ENCODE measurements at regions of chr2 and their contacts with region 1.

Region 1: GRCh38 chr2:197434541-197435513 is at the start of gene SF3B1:
- DNase-seq: peak; percentile 100
- H3K4me3 Mint-ChIP-seq: peak within 1 kb of the TSS; percentile 84
- H3K27ac Mint-ChIP-seq: peak within 1 kb of the TSS; percentile 100
- H3K4me1 Mint-ChIP-seq: peaks cover 45% of the 10 kb centered on the region
- H3K27me3 Mint-ChIP-seq: peaks cover 2% of the 10 kb centered on the region
- total RNA-seq, gene SF3B1: 259 and 278 TPM in 2 replicates

Region 2: GRCh38 chr2:197209742-197210408 is 225.0 kb before region 1 on chr2:
- intact Hi-C with region 1: loop called (anchors 5 kb)
- DNase-seq: peak; percentile 87
- H3K4me3 Mint-ChIP-seq: peak overlapping the region; percentile 68
- H3K27ac Mint-ChIP-seq: peak overlapping the region; percentile 97
- H3K4me1 Mint-ChIP-seq: peaks cover 93% of the 10 kb centered on the region
- H3K27me3 Mint-ChIP-seq: no peaks in the 10 kb centered on the region

Region 3: DNA sequence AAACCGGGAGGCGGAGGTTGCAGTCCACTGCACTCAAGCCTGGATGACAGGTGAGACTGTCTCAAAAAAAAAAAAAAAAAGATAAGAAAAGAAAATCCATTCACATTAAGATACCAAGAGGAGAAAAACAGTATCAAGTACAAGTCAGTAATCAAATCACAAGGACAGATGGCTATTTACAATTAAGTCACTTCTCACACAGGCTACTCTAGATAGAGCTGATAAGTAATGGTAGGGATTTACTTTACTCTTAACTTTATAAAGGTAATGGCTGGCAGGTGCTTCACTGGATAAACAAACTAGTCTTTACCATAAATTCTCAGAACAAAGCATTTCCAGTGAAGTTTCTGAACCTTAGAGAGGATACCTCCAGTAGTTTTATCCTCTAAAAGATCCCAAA is 11.5 kb before region 1 on chr2:
- intact Hi-C with region 1: loop called (anchors 1 kb)
- DNase-seq: no peak
- H3K4me3 Mint-ChIP-seq: no peak overlapping the region
- H3K27ac Mint-ChIP-seq: no peak overlapping the region
- H3K4me1 Mint-ChIP-seq: peaks cover 40% of the 10 kb centered on the region
- H3K27me3 Mint-ChIP-seq: no peaks in the 10 kb centered on the region

Region 4: GRCh38 chr2:197453161-197453914 is 18.5 kb after region 1 on chr2 and contains the start of gene COQ10B:
- intact Hi-C with region 1: loop called (anchors 1 kb)
- DNase-seq: peak; percentile 100
- H3K4me3 Mint-ChIP-seq: peak within 1 kb of the TSS; percentile 100
- H3K27ac Mint-ChIP-seq: peak within 1 kb of the TSS; percentile 100
- H3K4me1 Mint-ChIP-seq: peaks cover 26% of the 10 kb centered on the region
- H3K27me3 Mint-ChIP-seq: no peaks in the 10 kb centered on the region
- total RNA-seq, gene COQ10B: 20.1 TPM in 2 replicates

Region 5: GRCh38 chr2:197499594-197500526 is 65.0 kb after region 1 on chr2 and contains the starts of genes HSPD1 and HSPE1:
- intact Hi-C with region 1: loop called (anchors 1 kb)
- DNase-seq: peak; percentile 99
- H3K4me3 Mint-ChIP-seq: peak within 1 kb of the TSS; percentile 95
- H3K27ac Mint-ChIP-seq: peak within 1 kb of the TSS; percentile 98
- H3K4me1 Mint-ChIP-seq: peaks cover 41% of the 10 kb centered on the region
- H3K27me3 Mint-ChIP-seq: no peaks in the 10 kb centered on the region
- total RNA-seq, gene HSPD1: 984 and 999 TPM in 2 replicates
- total RNA-seq, gene HSPE1: 409 and 411 TPM in 2 replicates

Region 6: GRCh38 chr2:197515739-197516392 is 81.0 kb after region 1 on chr2 and contains the start of gene MOB4:
- intact Hi-C with region 1: loop called (anchors 1 kb)
- DNase-seq: peak; percentile 99
- H3K4me3 Mint-ChIP-seq: peak within 1 kb of the TSS; percentile 94
- H3K27ac Mint-ChIP-seq: peak within 1 kb of the TSS; percentile 91
- H3K4me1 Mint-ChIP-seq: peaks cover 21% of the 10 kb centered on the region
- H3K27me3 Mint-ChIP-seq: no peaks in the 10 kb centered on the region
- total RNA-seq, gene MOB4: 19.2 and 22.6 TPM in 2 replicates

Region 7: GRCh38 chr2:197777823-197778407 is 343.1 kb after region 1 on chr2:
- intact Hi-C with region 1: loop called (anchors 10 kb)
- DNase-seq: peak; percentile 77
- H3K4me3 Mint-ChIP-seq: no peak overlapping the region
- H3K27ac Mint-ChIP-seq: no peak overlapping the region
- H3K4me1 Mint-ChIP-seq: no peaks in the 10 kb centered on the region
- H3K27me3 Mint-ChIP-seq: peaks cover 19% of the 10 kb centered on the region

Measured in activated CD4-positive, alpha-beta T cell treated with anti-CD3 and anti-CD28 coated beads, Interleukin-2, amount 10 ng/mL, durations not matched to agents 24 days and 14 days (primary cell).